Posterior cingulate gyrus (tissue), 11 donors: ENCODE measurements at regions of chr12 and their contacts with region 1.

Region 1: DNA sequence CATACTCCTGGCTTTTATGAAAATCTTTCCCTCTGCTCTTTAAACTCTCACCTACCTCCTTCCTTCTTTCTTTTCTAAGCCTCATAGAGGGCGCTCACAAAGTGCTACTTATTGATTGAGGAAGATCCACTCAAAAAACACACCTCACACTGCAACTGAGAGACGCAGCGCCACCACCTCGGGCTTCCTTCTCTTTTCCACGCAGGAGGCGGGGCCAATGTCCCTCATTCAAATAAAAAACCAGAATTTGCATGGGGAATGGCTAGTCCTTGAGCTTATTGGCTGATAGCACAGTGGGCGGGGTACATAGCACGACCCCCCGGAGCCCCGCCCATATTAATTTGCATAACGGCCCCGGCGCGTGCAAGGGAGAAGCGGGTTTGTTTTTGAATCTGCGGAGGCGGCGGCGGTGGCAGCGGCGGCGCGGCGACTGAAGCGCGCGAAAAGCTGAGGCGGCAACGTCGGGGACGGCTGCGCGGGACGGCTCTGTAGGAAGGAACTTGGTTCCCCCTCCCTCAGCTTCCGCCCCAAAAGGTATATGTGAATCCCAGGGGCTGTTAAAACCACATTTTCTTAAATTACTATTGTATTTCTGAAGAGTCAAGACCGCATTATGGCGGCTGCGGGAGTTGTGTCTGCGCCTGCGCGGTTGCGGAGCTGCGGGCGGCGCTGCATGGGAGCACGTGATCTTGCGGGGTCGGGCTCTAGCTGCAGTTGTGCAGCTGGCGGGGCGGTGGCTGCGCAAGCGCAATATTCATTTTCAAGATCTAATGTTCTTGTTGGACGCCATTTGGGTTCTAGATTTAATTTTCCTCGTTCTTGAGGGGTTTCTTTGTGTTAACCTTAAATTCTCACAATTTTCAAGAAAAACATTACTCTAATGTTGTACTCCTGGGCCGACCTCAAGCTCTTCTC is at the start of gene ATF7IP:
- DNase-seq: peak; percentile 83 to 98 (median 91)

Region 2: GRCh38 chr12:14314801-14315200 is 50.8 kb before region 1 on chr12:
- intact Hi-C with region 1: no loop called
- DNase-seq: no peak

Region 3: GRCh38 chr12:14417715-14418114 is 52.2 kb after region 1 on chr12:
- intact Hi-C with region 1: loop called (anchors 5 kb)
- DNase-seq: peak; percentile 49 to 95 (median 70)